Gastrocnemius medialis (tissue), 4 donors: ENCODE measurements at regions of chr5 and their contacts with region 1.

Region 1: DNA sequence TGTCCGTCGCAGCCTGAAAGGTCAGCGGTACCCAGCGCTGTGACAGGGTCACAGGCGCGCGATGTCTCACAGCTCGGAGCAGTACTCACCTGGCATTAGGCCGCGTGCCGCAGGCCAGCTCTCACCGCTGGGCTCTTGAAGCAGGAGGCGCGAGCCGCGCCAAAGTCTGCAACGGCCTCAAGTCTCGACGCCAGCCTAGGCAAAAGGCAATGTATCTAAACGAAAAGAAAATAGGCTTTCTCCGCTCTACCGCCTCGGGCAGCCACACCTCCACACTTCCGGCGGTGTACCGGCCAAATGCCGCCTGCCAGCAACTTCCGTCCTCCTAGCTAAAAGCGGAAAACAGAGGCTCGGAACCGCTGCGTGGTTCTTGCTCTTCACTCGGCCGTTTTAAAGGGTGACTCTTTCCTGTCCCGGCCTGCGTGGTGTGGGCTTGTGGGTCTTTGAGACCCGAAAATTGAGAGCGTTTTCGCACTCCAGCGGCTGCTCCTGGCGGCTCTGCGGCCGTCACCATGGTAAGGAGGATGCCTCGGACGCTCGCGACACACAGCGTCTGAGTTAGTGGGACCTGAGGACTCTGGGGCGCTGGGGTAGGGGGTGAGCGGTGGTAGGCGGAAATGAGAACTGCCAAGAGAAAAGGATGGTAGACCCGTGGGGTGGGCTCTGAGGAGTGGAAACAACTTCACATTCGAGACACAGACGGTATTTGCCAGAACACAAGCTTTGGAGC is at the starts of genes GFM2 and NSA2:
- DNase-seq: peak; percentile 86 to 87
- ATAC-seq: peak; percentile 99
- H3K4me3 ChIP-seq: peak within 1 kb of the TSS; percentile 76 to 99 (median 97)
- H3K27ac ChIP-seq: peak within 1 kb of the TSS; percentile 82 to 90 (median 87)
- H3K4me1 ChIP-seq: peaks cover 25 to 29% of the 10 kb centered on the region in 2 donors
- H3K27me3 ChIP-seq: no peaks in the 10 kb centered on the region
- CTCF ChIP-seq: peak in 1 of 5 experiments; percentile 4
- POLR2A ChIP-seq: peak; percentile 21 to 42
- total RNA-seq, gene GFM2: 19.4 to 25.6 (median 23.8) TPM
- total RNA-seq, gene NSA2: 64.4 to 98.2 (median 94.9) TPM

Region 2: DNA sequence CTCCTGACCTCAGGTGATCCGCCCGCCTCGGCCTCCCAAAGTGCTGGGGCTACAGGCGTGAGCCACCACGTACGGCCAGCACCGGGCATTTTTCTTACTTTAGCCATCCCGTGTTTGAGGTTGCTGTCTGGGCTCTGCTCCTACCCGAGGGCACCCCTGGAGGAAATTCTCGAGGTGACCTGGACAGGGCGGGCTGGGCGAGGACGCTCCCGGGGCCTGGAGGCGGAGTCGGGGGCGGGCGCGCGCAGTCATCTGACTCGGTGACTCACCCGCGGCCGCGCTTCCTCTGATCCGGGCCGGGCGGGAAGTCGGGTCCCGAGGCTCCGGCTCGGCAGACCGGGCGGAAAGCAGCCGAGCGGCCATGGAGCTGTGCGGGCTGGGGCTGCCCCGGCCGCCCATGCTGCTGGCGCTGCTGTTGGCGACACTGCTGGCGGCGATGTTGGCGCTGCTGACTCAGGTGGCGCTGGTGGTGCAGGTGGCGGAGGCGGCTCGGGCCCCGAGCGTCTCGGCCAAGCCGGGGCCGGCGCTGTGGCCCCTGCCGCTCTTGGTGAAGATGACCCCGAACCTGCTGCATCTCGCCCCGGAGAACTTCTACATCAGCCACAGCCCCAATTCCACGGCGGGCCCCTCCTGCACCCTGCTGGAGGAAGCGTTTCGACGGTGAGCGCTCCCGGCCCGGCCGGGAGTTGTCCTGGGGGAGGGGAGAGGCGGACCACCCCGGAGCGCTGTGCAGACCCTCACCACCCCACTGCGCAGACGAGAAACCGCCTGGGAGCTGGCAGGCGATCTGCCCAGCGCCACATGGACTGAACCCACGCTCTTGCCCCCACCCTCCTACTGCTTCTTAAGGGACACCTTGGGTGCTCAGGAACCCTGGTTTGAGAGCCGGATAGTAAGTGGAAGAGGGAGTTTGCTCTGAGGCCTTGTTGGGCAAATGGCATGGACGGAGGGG is 81.8 kb before region 1 on chr5 and contains the start of gene HEXB:
- in situ Hi-C with region 1: no loop called
- intact Hi-C with region 1: loop called (anchors 1 kb)
- DNase-seq: peak; percentile 80 to 83
- ATAC-seq: peak; percentile 90 to 91
- H3K4me3 ChIP-seq: peak within 1 kb of the TSS; percentile 84 to 96 (median 92)
- H3K27ac ChIP-seq: peak within 1 kb of the TSS; percentile 83 to 90 (median 89)
- H3K4me1 ChIP-seq: peaks cover 7 to 12% of the 10 kb centered on the region in 2 donors
- H3K27me3 ChIP-seq: no peaks in the 10 kb centered on the region
- CTCF ChIP-seq: peak in 1 of 5 experiments; percentile 4
- POLR2A ChIP-seq: peak; percentile 84 to 86
- total RNA-seq, gene HEXB: 32.3 to 54.4 (median 47.1) TPM

Region 3: DNA sequence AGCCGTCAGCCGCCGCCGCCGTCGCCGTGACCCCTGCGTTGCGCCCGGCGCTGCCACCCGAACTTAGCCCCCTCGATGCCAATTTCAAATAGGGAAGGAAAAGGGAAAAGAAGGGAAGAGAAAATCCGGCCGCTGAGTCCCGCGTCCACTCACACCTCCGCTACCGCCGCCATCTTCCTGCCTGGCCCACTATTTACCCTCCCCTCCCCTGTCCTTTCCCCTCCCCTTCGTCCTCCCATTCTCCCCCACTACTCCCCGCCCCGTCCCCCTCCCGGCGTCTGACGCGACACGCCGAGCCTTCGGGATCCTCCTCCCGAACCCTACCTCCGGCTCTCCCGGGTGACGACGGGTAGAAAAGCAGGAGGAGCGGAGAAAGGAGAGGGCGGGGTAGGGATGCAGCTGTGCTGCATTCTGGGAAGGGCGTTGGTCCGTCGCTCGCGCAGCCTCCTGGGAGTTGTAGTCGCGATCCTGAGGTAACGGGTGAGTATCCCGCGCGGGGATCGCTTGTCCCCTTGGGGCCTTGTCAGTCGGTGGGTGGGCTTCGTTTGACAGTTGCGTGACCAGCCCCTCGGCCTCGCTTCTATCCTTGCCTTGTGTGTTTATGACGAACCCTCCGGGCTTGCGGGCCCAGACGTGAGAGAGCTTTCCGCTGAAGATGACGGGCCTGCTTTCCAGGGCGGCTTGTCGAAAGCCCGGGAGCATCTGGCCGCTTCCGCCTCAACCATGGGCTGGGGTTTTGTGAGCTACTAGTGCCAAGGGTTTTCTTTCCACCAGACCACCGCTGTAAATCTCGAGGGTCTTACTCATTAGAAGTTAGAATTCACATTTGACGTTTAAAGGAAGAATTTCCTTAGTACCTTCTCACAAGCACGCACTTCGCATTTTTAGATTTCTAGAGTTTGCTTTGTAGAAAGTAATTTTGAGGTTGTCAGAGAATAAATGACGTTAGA is 744.7 kb after region 1 on chr5 and contains the starts of genes CERT1 and POLK:
- in situ Hi-C with region 1: no loop called
- intact Hi-C with region 1: loop called (anchors 1 kb)
- DNase-seq: peak; percentile 98
- ATAC-seq: peak; percentile 89 to 91
- H3K4me3 ChIP-seq: peak within 1 kb of the TSS; percentile 87 to 97 (median 94)
- H3K27ac ChIP-seq: peak within 1 kb of the TSS; percentile 92 to 99 (median 96)
- H3K4me1 ChIP-seq: peaks cover 46 to 49% of the 10 kb centered on the region in 2 donors
- H3K27me3 ChIP-seq: no peaks in the 10 kb centered on the region
- CTCF ChIP-seq: no peak
- POLR2A ChIP-seq: peak; percentile 84 to 90
- total RNA-seq, gene CERT1: 30.8 to 50.6 (median 41.9) TPM
- total RNA-seq, gene POLK: 23.9 to 35.8 (median 27.8) TPM

Region 4: GRCh38 chr5:75558981-75559632 is 792.1 kb after region 1 on chr5:
- in situ Hi-C with region 1: no loop called
- intact Hi-C with region 1: no loop called
- DNase-seq: no peak
- ATAC-seq: peak; percentile 41 to 45
- H3K4me3 ChIP-seq: no peak overlapping the region
- H3K27ac ChIP-seq: peak overlapping the region in 3 of 4 donors; percentile 13 to 67 (median 51)
- H3K4me1 ChIP-seq: peaks cover 0 to 4% of the 10 kb centered on the region in 2 donors
- H3K27me3 ChIP-seq: no peaks in the 10 kb centered on the region
- CTCF ChIP-seq: no peak
- POLR2A ChIP-seq: no peak